Activated naive CD4-positive, alpha-beta T cell treated with anti-CD3 and anti-CD28 coated beads for 36 hours (primary cell): ENCODE measurements at regions of chr1 and their contacts with region 1.

Region 1: GRCh38 chr1:14094611-14095400 is 394.8 kb downstream of the PRDM2 start:
- DNase-seq: no peak
- H3K4me3 Mint-ChIP-seq: no peak overlapping the region
- H3K27ac Mint-ChIP-seq: no peak overlapping the region
- H3K4me1 Mint-ChIP-seq: no peaks in the 10 kb centered on the region
- H3K27me3 Mint-ChIP-seq: peaks cover 20% of the 10 kb centered on the region

Region 2: GRCh38 chr1:13407811-13408210 is 687.0 kb before region 1 on chr1:
- CTCF ChIA-PET with region 1: no interaction called
- intact Hi-C with region 1: no loop called
- DNase-seq: no peak
- H3K4me3 Mint-ChIP-seq: no peak overlapping the region
- H3K27ac Mint-ChIP-seq: no peak overlapping the region
- H3K4me1 Mint-ChIP-seq: no peaks in the 10 kb centered on the region
- H3K27me3 Mint-ChIP-seq: peaks cover 6% of the 10 kb centered on the region

Region 3: DNA sequence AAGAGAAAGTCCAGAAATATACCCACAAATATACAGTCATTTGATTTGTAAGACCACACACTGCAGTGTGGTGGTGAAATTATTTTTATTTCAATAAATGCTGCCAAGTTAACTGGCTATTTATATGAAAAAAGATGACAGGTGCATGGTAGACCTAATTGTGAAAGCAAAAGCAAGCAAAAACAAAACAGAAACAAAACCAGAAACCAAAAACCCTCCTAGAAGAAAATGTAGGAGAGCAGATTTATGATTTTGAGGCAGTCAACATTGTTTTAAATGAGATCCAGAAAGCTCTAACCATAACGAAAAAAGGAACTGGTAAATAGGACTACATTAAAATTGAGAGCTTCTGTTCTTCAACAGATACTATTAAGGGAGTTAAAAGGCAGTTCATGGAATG is 91.3 kb before region 1 on chr1:
- CTCF ChIA-PET with region 1: no interaction called
- intact Hi-C with region 1: no loop called
- DNase-seq: no peak
- H3K4me3 Mint-ChIP-seq: no peak overlapping the region
- H3K27ac Mint-ChIP-seq: no peak overlapping the region
- H3K4me1 Mint-ChIP-seq: no peaks in the 10 kb centered on the region
- H3K27me3 Mint-ChIP-seq: peaks cover 10% of the 10 kb centered on the region

Region 4: DNA sequence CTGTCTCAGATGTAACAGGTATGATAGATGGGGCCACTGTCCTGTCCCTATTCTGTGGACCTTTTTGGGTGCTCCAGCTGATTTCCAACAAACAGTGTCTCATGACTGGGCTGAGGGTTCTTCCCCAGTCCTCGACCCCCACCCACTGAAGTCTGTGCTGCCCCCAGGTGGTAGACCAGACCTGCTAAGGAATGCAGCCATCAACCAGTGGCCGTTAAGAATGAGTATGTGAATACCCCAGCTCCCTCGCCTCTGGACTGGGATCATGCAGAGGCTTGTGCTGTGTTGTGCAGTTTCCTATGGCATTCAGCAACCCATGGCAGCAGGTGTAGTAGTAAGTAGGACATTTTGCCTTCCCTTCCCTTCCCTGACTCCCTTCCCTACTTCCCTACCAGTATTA is 320.6 kb after region 1 on chr1:
- CTCF ChIA-PET with region 1: no interaction called
- intact Hi-C with region 1: loop called (anchors 2 kb)
- DNase-seq: peak; percentile 53
- H3K4me3 Mint-ChIP-seq: no peak overlapping the region
- H3K27ac Mint-ChIP-seq: no peak overlapping the region
- H3K4me1 Mint-ChIP-seq: no peaks in the 10 kb centered on the region
- H3K27me3 Mint-ChIP-seq: no peaks in the 10 kb centered on the region